GM13977 (cell line): ENCODE measurements at regions of chr12 and their contacts with region 1.

Region 1: DNA sequence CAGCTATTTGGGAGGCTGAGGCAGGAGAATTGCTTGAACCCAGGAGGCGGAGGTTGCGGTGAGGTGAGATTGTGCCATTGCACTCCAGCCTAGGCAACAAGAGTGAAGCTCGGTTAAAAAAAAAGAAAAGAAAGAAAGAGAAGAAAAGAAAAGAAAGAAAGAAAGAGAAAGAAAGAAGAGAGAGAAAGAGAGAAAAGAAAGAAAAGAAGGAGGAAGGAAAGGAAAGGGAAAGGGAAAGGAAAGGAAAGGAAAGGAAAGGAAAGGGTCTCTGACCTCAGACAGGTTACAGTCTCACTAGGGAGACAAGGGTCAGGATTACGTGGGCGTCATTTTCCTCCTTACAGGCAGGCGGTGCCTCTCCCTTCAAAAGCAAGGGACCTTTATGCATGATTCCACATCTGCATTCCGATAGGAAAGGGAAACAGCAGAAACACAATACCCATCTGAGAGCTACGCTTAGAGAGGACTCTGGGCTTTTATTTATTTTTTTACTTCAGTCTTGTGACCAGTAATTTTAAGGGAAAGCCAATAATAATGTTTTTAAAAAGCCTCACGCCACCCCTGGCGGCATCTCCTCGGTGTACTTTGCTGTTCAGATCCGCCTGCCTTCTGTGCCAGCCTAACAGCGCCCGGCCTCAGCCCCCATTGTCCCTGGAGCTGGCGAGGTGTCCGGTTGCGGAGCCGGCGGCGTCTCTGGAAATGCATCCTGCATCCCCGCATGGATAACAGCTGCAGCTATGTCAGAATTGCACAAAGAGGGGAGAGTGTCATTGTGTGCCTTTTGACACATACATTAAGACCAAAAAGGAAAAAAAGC is 945 bp upstream of the HIP1R start:
- DNase-seq: peak; percentile 41
- CTCF ChIP-seq: no peak

Region 2: GRCh38 chr12:122946690-122947341 is 112.5 kb after region 1 on chr12:
- in situ Hi-C with region 1: no loop called
- DNase-seq: peak; percentile 81
- CTCF ChIP-seq: no peak

Region 3: DNA sequence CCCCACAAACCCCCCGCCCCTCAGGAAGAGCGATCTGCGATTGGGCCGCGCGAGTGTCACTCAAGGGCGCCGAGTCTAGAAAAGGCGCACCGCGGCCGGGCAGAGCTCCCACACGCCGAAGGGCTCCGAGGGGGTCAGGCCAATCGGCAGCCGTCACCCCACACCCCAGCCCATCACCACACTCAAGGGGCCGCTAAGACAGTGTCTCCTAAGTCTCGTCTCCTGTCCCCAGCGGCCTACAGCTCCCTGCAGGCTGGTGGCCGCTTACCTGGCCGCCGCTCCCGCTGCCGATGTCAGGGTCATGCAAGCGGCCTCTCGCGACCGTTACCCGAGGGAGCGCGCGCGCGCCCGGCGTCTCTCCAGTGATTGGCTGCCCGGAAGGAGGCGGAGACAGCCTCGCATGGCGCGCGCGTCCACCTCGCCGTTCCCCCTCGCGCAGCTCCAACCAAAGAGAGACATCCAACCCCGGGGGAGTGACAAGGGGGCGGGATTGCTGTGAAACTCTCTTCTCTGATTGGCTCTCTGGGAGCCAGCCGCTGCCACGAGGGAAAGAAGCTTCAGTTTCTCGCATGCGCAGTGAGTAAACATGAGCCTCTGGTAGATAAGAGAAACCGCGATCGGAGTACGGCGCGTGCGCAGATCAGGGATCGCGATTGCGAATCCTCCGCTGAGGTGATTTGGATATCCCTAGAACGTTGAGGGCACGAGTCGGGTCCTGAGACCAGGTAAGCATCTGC is 398.7 kb after region 1 on chr12 and contains the starts of genes MPHOSPH9 and MTRFR:
- in situ Hi-C with region 1: loop called (anchors 25 kb)
- DNase-seq: peak; percentile 94
- CTCF ChIP-seq: no peak